HEK293T (cell line): ENCODE measurements at regions of chr19 and their contacts with region 1.

Region 1: GRCh38 chr19:18281082-18282020 is at the start of gene JUND:
- DNase-seq: peak; percentile 98

Region 2: GRCh38 chr19:18224525-18225354 is 56.6 kb before region 1 on chr19:
- CTCF ChIA-PET with region 1: interaction called, 12 read pairs
- POLR2A ChIA-PET with region 1: interaction called, 36 read pairs
- DNase-seq: peak; percentile 98

Region 3: GRCh38 chr19:18297308-18297707 is 16.0 kb after region 1 on chr19:
- CTCF ChIA-PET with region 1: interaction called, 20 read pairs
- POLR2A ChIA-PET with region 1: interaction called, 120 read pairs
- DNase-seq: no peak

Region 4: GRCh38 chr19:18328340-18329034 is 47.1 kb after region 1 on chr19:
- CTCF ChIA-PET with region 1: interaction called, 77 read pairs
- POLR2A ChIA-PET with region 1: interaction called, 491 read pairs
- DNase-seq: peak; percentile 93

Region 5: DNA sequence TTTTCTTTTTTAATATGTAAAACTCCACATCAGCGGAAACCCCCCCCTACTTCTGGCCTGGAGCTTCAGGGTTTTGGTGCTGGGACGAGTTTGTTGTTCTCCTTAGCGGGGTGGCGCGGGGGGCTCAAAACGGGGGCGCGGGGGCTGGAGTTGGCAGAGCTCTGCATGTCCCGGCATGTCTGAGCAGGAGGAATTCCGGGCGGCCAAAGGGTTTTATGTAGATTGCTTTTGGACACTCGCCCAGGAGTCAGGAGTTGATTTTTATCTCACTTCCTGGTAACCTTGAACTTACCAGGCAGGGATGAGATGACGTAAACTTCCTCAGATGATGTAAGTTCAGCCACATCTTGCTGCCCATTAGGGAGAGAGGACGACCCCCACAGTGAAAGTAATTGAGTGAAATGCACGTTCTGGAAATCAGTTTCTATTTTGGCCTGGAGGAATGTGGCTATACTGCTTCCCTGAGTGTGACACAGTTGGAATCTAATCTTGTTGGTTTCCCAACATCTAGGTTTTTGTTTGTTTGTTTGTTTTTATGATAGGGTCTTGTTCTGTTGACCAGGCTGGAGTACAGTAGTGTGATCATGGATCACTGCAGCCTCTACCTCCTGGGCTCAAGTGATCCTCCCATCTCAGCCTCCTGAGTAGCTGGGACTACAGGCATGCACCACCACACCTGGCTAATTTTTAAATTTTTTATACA is 83.6 kb after region 1 on chr19:
- CTCF ChIA-PET with region 1: interaction called, 8 read pairs
- POLR2A ChIA-PET with region 1: interaction called, 14 read pairs
- DNase-seq: peak; percentile 48

Region 6: DNA sequence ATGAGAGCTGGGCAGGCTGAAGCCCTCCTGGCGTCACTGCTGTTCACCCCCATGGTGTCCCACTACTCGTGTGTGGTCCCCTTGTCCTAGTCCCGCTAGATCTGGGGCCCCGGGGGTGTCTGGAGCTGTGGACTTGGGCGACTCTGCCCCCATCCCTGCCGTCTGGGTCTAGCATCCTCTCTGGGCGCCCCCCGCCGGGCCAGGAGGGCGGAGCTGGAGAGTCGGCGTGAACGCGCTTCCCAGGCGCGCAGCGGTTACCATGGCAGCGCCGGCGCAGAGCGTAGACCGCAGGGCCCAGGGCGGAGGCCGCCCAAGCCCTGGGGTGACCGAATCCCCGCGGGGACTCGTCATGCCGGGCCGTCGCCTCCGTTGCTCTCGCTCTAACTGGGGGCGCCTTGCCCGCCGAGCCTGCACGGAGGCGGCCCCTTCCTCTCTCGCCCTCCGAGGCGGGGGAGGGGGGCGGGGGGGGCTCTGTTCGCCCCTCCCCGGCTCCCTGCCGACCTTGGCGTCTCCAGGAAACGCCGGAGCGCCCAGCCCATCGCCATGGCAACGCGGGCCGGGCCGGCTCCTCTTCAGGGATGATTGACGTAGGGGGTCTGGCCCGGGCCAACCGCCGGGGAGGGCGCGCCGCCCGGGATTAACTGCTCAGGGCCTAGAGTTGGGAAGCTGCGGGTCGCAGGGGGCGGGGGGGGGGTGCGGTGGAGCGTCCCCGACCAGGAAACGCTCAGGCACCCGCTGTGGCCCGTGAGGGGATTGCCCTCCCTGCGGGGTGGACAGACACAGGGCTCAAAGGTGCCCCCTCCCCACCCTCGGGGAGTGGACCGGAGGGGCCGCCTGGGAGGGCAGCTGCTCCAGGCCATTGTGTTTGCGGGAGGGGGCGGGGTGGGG is 147.7 kb after region 1 on chr19:
- CTCF ChIA-PET with region 1: no interaction called
- POLR2A ChIA-PET with region 1: interaction called, 10 read pairs
- DNase-seq: peak; percentile 87